Endothelial cell of umbilical vein (primary cell): ENCODE measurements at regions of chrX and their contacts with region 1.

Region 1: DNA sequence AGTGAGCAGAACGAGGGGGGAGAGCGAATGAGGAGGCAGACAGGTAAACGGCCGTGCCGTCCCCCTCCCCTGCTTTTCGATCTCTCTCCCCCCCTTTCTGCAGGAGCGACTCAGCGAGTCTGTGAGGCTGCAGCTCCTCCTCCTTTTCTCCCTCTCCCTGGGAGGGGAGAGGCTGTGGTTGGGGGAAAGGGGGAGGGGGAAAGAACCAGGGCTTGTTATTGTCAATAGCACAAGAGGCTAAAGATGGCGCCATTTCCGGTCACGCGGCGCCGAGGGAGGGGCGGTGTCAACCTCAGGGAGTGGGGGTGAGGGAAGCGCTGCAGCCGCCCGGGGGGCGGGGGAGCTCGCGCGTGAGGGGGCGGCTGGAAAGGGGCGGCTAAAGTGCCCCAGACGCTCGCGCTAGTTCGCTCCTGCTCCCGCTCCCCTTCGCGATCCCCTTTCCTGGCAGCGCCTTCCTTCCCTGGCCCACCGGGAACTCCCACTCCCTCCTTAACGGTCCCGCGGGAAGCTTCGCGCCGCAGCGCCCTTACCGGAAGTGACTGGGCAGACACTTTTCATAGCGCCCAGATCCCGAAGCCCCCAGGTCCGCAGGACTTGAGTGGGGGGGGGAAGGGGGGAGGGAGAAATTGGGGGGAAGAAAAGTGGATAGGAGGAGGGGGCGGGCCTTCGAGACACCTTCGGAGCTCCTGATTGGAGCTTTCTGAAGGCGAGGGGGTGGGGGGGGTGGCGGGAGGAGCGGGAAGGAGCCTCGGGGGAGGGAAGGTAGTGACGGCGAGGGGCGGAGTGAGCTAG is at the start of gene CUL4B:
- DNase-seq: peak; percentile 95
- H3K4me3 ChIP-seq: peak within 1 kb of the TSS; percentile 81 to 99 (median 98)
- H3K27ac ChIP-seq: peak within 1 kb of the TSS; percentile 94
- H3K4me1 ChIP-seq: peaks cover 22% of the 10 kb centered on the region
- H3K27me3 ChIP-seq: no peaks in the 10 kb centered on the region
- CTCF ChIP-seq: no peak
- POLR2A ChIP-seq: peak; percentile 75
- total RNA-seq, gene CUL4B: 84.3 and 90.0 TPM in 2 replicates

Region 2: DNA sequence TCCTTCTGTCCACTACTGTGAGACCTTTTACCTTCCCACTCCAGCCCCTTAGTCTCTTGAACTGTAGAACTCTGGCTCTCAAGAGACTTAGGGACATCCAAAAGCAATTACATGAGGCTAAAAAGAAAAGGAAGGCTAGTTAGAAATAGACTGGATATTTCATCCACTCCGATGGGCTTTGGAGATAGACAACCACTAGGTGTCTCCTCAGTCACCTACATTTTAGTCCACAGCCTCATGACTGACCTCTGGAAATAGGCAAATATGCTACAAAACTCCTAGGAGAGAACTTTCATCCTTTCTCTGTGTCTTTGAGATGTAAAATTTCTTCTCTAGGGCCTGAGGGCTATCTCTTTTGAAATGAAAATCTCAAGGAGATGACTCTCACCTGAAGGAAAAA is 46.8 kb before region 1 on chrX:
- CTCF ChIA-PET with region 1: no interaction called
- POLR2A ChIA-PET with region 1: no interaction called
- dilution Hi-C with region 1: no loop called
- intact Hi-C with region 1: loop called (anchors 1 kb)
- DNase-seq: peak; percentile 7
- H3K4me3 ChIP-seq: no peak overlapping the region
- H3K27ac ChIP-seq: no peak overlapping the region
- H3K4me1 ChIP-seq: peaks cover 7% of the 10 kb centered on the region
- H3K27me3 ChIP-seq: no peaks in the 10 kb centered on the region
- CTCF ChIP-seq: peak; percentile 14 to 33
- POLR2A ChIP-seq: no peak

Region 3: GRCh38 chrX:120575379-120576114 is 14.5 kb after region 1 on chrX:
- CTCF ChIA-PET with region 1: no interaction called
- POLR2A ChIA-PET with region 1: no interaction called
- dilution Hi-C with region 1: no loop called
- intact Hi-C with region 1: no loop called
- DNase-seq: no peak
- H3K4me3 ChIP-seq: no peak overlapping the region
- H3K27ac ChIP-seq: no peak overlapping the region
- H3K4me1 ChIP-seq: no peaks in the 10 kb centered on the region
- H3K27me3 ChIP-seq: no peaks in the 10 kb centered on the region
- CTCF ChIP-seq: no peak
- POLR2A ChIP-seq: no peak

Region 4: DNA sequence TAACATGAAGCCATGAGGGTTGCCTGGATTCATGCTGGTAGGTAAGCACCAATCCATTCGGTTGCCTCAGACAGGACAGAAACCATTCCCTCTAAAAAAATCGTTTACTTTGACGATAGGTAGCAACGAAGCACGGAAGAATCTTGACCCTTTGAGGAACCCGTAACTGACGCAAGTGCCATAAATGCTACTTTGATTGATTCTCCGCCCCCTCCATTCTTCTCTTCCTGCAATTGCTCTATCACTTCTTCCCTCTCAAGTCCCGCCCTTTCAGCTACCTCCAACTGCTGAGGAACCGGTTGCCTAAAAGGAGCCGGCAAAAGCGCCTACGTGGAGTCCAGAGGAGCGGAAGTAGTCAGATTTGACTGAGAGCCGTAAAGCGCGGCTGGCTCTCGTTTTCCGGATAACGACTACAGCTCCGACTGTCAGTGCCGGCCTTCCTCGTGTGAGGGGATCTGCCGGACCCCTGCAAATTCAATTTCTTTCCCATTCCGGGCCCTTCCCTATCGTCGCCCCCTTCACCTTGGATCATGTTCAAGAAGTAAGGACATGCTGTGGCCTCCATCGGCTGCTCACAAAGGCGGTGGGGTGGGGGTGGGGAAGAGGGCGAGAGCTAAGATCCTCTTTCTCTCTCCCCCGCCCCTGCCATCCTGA is 42.8 kb after region 1 on chrX and contains the start of gene MCTS1:
- CTCF ChIA-PET with region 1: interaction called, 3 read pairs
- POLR2A ChIA-PET with region 1: interaction called, 17 read pairs
- dilution Hi-C with region 1: no loop called
- intact Hi-C with region 1: loop called (anchors 1 kb)
- DNase-seq: peak; percentile 94
- H3K4me3 ChIP-seq: peak within 1 kb of the TSS; percentile 76 to 83 (median 79)
- H3K27ac ChIP-seq: peak within 1 kb of the TSS; percentile 72
- H3K4me1 ChIP-seq: peaks cover 10% of the 10 kb centered on the region
- H3K27me3 ChIP-seq: no peaks in the 10 kb centered on the region
- CTCF ChIP-seq: no peak
- POLR2A ChIP-seq: no peak
- total RNA-seq, gene MCTS1: 63.2 and 70.0 TPM in 2 replicates

Region 5: GRCh38 chrX:120672390-120672789 is 111.4 kb after region 1 on chrX:
- CTCF ChIA-PET with region 1: no interaction called
- POLR2A ChIA-PET with region 1: no interaction called
- dilution Hi-C with region 1: no loop called
- intact Hi-C with region 1: loop called (anchors 2 kb)
- DNase-seq: peak; percentile 85
- H3K4me3 ChIP-seq: no peak overlapping the region
- H3K27ac ChIP-seq: peak overlapping the region; percentile 94
- H3K4me1 ChIP-seq: peaks cover 31% of the 10 kb centered on the region
- H3K27me3 ChIP-seq: no peaks in the 10 kb centered on the region
- CTCF ChIP-seq: no peak
- POLR2A ChIP-seq: peak; percentile 21

Region 6: GRCh38 chrX:120797188-120797851 is 236.3 kb after region 1 on chrX:
- CTCF ChIA-PET with region 1: no interaction called
- POLR2A ChIA-PET with region 1: no interaction called
- dilution Hi-C with region 1: no loop called
- intact Hi-C with region 1: loop called (anchors 1 kb)
- DNase-seq: peak; percentile 78
- H3K4me3 ChIP-seq: no peak overlapping the region
- H3K27ac ChIP-seq: peak overlapping the region; percentile 86
- H3K4me1 ChIP-seq: peaks cover 54% of the 10 kb centered on the region
- H3K27me3 ChIP-seq: no peaks in the 10 kb centered on the region
- CTCF ChIP-seq: no peak
- POLR2A ChIP-seq: no peak

Region 7: DNA sequence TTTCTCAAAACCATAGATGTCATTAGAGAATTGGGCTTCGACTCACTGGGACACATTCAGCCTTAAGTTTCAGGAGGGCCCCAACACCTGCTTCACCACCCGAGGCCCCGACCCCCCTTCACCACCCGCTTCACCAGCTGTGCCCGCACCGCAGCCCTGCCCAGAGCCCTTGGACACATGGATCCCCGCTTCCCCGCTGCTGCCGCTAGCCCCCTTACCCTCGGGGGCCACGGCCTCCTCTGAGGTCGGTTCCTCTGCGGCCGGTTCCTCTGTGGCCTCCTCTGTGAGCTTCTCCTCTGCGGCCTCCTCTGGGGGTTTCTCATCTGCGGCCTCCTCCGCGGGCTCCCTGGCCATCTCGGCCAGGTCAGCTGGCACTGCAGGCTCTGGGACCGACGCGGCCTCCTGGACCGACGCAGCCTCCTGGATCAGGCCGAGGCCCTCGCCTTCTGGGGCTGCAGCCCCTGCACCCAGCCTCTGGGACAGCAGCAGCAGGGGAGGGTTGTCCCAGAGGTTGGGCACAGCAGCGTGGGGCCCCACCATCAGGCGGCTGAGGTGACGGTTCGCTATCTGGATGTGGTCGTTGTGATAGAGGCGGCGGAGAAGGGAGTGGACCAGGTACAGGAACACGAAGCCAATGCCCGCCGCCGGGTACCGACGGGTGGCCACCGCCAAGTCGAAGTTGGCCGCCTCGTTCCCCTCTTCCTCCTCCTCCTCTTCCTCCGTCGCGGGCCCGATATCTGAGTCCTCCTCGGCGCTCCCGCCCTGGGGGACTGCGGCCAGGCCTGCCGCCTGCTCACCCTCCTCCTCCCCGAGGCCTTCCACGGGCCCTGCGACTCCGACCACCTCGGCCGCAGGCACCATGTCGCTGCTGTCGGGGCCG is 313.9 kb after region 1 on chrX:
- CTCF ChIA-PET with region 1: no interaction called
- POLR2A ChIA-PET with region 1: no interaction called
- dilution Hi-C with region 1: no loop called
- intact Hi-C with region 1: no loop called
- DNase-seq: no peak
- H3K4me3 ChIP-seq: no peak overlapping the region
- H3K27ac ChIP-seq: no peak overlapping the region
- H3K4me1 ChIP-seq: no peaks in the 10 kb centered on the region
- H3K27me3 ChIP-seq: no peaks in the 10 kb centered on the region
- CTCF ChIP-seq: no peak
- POLR2A ChIP-seq: no peak